Activated naive CD4-positive, alpha-beta T cell treated with anti-CD3 and anti-CD28 coated beads, Interleukin-2, amount 10 ng/mL, durations not matched to agents 7 days and 5 days (primary cell): ENCODE measurements at regions of chr4 and their contacts with region 1.

Region 1: GRCh38 chr4:88211473-88212252 is 53.2 kb upstream of the ABCG2 start:
- DNase-seq: peak; percentile 61
- H3K4me3 Mint-ChIP-seq: no peak overlapping the region
- H3K27ac Mint-ChIP-seq: no peak overlapping the region
- H3K4me1 Mint-ChIP-seq: no peaks in the 10 kb centered on the region
- H3K27me3 Mint-ChIP-seq: peaks cover 7% of the 10 kb centered on the region

Region 2: GRCh38 chr4:87848622-87849351 is 362.9 kb before region 1 on chr4:
- CTCF ChIA-PET with region 1: interaction called, 14 read pairs
- DNase-seq: peak; percentile 51
- H3K4me3 Mint-ChIP-seq: no peak overlapping the region
- H3K27ac Mint-ChIP-seq: no peak overlapping the region
- H3K4me1 Mint-ChIP-seq: peaks cover 11% of the 10 kb centered on the region
- H3K27me3 Mint-ChIP-seq: peaks cover 26% of the 10 kb centered on the region

Region 3: DNA sequence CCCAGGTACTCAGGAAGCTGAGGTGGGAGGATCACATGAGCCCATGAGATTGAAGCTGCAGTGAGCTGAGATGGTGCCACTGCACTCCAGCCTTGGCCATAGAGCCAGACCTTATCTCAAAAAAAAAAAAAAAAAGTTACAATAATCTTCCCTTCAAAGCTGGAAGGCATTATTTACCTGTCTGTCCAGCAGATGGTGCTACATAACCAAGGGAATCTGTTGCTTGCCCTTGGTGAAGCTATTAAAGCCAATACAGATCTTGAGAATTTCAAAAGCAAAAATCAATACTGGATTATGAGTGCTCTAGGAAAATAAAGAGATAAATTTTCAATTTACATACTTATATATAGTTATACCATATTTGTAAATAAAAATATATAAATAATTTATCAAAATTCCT is 178.4 kb before region 1 on chr4:
- CTCF ChIA-PET with region 1: interaction called, 67 read pairs
- DNase-seq: peak; percentile 48
- H3K4me3 Mint-ChIP-seq: no peak overlapping the region
- H3K27ac Mint-ChIP-seq: no peak overlapping the region
- H3K4me1 Mint-ChIP-seq: no peaks in the 10 kb centered on the region
- H3K27me3 Mint-ChIP-seq: no peaks in the 10 kb centered on the region

Region 4: GRCh38 chr4:88075336-88075735 is 136.3 kb before region 1 on chr4:
- CTCF ChIA-PET with region 1: no interaction called
- DNase-seq: no peak
- H3K4me3 Mint-ChIP-seq: no peak overlapping the region
- H3K27ac Mint-ChIP-seq: no peak overlapping the region
- H3K4me1 Mint-ChIP-seq: no peaks in the 10 kb centered on the region
- H3K27me3 Mint-ChIP-seq: no peaks in the 10 kb centered on the region

Region 5: DNA sequence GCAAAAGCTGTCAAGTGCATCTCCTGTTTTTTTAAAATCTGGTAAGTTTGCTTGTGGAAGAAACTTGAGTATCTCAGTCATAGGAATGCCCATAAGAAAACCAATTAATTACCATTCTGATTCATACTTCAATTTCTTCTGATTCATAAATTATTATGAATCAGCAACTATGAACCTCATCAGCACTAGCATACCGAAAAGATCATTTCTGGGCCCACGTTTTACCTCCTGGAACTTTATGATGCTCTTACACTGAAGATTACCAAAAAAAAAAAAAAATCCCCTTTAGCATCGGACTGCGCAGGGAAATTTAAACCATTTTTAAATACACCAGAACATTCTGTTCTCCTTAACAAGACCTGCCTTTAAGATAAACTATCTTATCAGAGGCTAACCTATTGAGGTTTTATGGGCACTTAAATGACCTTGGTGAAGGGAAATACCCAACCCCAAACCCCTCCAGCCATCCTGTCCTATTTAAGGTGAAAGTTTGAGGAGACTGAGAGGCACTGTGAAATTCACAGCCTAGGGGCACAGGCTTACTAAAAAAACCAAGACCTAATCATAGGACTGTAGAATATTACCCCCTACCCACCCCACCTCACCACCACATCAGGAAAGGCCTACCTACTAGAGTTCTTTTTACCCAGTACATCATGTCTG is 15.0 kb before region 1 on chr4:
- CTCF ChIA-PET with region 1: interaction called, 11 read pairs
- DNase-seq: no peak
- H3K4me3 Mint-ChIP-seq: no peak overlapping the region
- H3K27ac Mint-ChIP-seq: no peak overlapping the region
- H3K4me1 Mint-ChIP-seq: no peaks in the 10 kb centered on the region
- H3K27me3 Mint-ChIP-seq: no peaks in the 10 kb centered on the region